Right ventricle myocardium superior (tissue), 1 donor: ENCODE measurements at regions of chr5 and their contacts with region 1.

Region 1: DNA sequence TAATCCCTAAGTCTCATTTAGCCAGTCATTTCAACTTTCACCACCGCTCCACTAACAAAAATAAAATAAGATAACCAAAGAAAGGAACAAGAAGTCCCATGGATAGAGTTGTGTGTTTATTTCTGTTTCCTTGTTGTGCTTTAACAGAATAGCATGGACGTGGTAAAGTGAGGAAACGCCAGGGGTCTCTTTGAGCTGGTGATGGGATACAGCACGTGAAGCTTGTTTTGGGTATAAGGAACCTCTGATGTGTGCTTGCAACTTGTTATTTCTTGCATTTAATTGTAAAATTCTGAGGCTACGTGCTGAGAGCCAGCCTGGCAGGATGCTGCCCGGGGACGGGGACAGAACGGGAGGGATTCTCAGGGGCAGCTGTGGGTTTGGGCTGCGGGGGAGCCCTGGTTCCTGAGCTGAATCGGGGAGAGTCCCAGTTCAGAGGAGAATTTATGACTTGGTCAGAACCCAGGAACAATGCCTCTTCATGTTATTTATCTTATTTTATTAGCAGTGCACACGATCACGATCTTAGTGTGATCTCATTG is 63.4 kb downstream of the ANKRD33B start:
- DNase-seq: no peak
- ATAC-seq: peak; percentile 7

Region 2: GRCh38 chr5:10214041-10214440 is 413.2 kb before region 1 on chr5:
- intact Hi-C with region 1: no loop called
- DNase-seq: no peak
- ATAC-seq: no peak

Region 3: DNA sequence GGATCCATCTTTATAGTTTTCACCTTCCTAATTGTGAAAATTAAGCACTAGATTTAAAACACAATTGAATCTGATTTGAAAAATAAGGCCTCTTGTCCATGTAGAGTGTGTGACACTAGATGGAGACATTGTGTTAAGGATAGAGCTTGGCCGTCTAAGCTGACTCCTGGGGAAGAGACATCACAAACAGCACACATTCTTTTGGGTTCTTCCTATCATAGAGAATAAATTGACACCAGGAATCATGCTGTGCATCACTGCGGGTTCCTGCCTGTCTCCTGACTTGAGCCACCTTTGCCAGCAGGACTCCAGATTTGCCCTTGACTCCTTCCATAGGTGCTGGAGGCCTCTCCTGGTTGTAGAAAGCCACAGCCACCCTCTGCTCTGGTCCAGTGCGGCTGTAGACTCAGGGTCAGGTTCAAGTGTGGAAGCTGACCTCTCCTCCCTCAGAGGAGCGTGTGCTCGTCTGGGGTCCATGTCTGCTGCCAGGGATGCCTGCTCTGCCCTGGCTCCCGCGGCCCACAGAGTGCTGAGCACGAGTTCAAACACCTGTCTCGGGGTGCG is 174.4 kb before region 1 on chr5:
- intact Hi-C with region 1: loop called (anchors 1 kb)
- DNase-seq: no peak
- ATAC-seq: peak; percentile 86

Region 4: GRCh38 chr5:11027660-11028059 is 400.4 kb after region 1 on chr5:
- intact Hi-C with region 1: no loop called
- DNase-seq: no peak
- ATAC-seq: no peak